Mammary epithelial cell (primary cell): ENCODE measurements at regions of chr6 and their contacts with region 1.

Region 1: GRCh38 chr6:26216356-26216885 is 129.2 kb downstream of the HFE start:
- DNase-seq: peak; percentile 98
- H3K4me3 ChIP-seq: peak overlapping the region; percentile 57 to 68 (median 65)
- H3K27ac ChIP-seq: peak overlapping the region; percentile 86
- H3K4me1 ChIP-seq: peaks cover 12% of the 10 kb centered on the region
- H3K27me3 ChIP-seq: no peaks in the 10 kb centered on the region
- CTCF ChIP-seq: no peak

Region 2: GRCh38 chr6:25746968-25747367 is 469.5 kb before region 1 on chr6:
- CTCF ChIA-PET with region 1: no interaction called
- dilution Hi-C with region 1: no loop called
- in situ Hi-C with region 1: no loop called
- intact Hi-C with region 1: no loop called
- DNase-seq: no peak
- H3K4me3 ChIP-seq: no peak overlapping the region
- H3K27ac ChIP-seq: no peak overlapping the region
- H3K4me1 ChIP-seq: no peaks in the 10 kb centered on the region
- H3K27me3 ChIP-seq: no peaks in the 10 kb centered on the region
- CTCF ChIP-seq: no peak

Region 3: GRCh38 chr6:26045065-26045927 is 171.1 kb before region 1 on chr6:
- CTCF ChIA-PET with region 1: no interaction called
- dilution Hi-C with region 1: no loop called
- in situ Hi-C with region 1: no loop called
- intact Hi-C with region 1: loop called (anchors 1 kb)
- DNase-seq: peak; percentile 93
- H3K4me3 ChIP-seq: peak overlapping the region; percentile 37 to 64 (median 44)
- H3K27ac ChIP-seq: peak overlapping the region; percentile 79
- H3K4me1 ChIP-seq: peaks cover 27% of the 10 kb centered on the region
- H3K27me3 ChIP-seq: no peaks in the 10 kb centered on the region
- CTCF ChIP-seq: peak; percentile 22 to 36

Region 4: DNA sequence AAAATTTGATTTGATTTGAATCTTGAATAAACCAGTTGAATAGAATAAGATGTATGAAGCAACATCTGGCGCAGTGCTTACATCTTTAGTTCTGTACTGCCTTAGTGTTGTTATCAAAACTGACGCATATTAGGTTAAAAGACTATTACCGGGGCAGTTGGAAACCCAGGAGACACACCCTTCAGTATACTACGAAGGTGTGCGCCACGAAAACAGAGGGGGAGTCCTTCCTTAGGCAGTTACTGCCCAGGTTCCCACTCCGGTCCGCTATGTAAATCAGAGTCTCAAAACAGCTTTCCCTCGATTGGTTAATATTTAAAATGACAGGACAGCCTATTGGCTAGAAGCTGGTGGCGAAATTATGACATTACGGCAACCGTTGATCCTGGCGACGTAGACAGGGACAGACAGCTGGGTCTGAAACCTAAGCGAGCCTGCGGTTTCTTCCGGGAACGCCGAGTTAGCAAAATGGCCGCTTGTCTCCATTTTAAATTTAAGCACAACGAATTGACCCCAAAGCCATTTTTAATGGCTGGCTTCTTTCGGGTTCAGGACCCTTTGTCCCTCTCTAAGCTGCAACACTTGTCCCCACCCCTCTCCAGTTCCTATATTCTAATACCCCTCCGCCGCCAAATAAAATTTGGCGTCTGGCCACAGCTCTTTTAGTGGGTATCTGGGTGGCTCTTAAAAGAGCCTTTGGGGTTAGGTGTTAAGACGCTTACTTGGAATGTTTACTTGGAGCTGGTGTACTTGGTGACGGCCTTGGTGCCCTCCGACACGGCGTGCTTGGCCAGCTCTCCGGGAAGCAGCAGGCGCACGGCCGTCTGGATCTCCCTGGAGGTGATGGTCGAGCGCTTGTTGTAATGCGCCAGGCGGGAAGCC is 93.4 kb before region 1 on chr6:
- CTCF ChIA-PET with region 1: no interaction called
- dilution Hi-C with region 1: no loop called
- in situ Hi-C with region 1: no loop called
- intact Hi-C with region 1: loop called (anchors 5 kb)
- DNase-seq: peak; percentile 97
- H3K4me3 ChIP-seq: peak overlapping the region; percentile 51 to 62 (median 53)
- H3K27ac ChIP-seq: peak overlapping the region; percentile 92
- H3K4me1 ChIP-seq: peaks cover 28% of the 10 kb centered on the region
- H3K27me3 ChIP-seq: no peaks in the 10 kb centered on the region
- CTCF ChIP-seq: no peak

Region 5: DNA sequence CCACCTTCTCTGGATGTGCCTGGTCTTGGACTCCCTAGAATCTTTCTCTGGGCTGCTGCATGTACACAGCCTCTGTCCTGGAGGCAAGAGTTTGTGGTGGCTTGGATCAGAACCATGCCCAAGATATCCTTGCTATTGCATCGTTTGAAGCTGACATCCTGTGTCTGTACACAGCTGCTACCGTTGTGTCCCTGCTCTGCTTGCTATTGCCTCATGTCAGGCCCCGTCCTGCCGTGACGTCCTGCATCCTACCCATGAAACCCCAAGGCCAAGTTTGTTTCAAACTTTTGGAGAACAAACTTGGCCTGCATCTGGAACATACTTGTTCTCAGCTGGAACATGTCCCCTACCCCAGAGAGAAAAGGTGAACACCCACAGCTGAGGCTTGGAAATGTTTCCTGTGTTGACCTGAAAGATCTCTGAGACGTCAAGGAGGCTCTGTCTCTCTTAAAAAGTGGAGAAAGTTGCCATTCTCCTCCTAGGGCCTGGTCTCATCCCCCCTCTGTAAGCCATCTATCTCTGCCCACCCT is 51.1 kb before region 1 on chr6:
- CTCF ChIA-PET with region 1: no interaction called
- dilution Hi-C with region 1: no loop called
- in situ Hi-C with region 1: no loop called
- intact Hi-C with region 1: no loop called
- DNase-seq: no peak
- H3K4me3 ChIP-seq: no peak overlapping the region
- H3K27ac ChIP-seq: no peak overlapping the region
- H3K4me1 ChIP-seq: no peaks in the 10 kb centered on the region
- H3K27me3 ChIP-seq: no peaks in the 10 kb centered on the region
- CTCF ChIP-seq: no peak

Region 6: GRCh38 chr6:26196846-26197648 is 19.4 kb before region 1 on chr6:
- CTCF ChIA-PET with region 1: no interaction called
- dilution Hi-C with region 1: no loop called
- in situ Hi-C with region 1: no loop called
- intact Hi-C with region 1: loop called (anchors 1 kb)
- DNase-seq: peak; percentile 89
- H3K4me3 ChIP-seq: peak overlapping the region; percentile 69 to 90 (median 87)
- H3K27ac ChIP-seq: peak overlapping the region; percentile 87
- H3K4me1 ChIP-seq: peaks cover 8% of the 10 kb centered on the region
- H3K27me3 ChIP-seq: no peaks in the 10 kb centered on the region
- CTCF ChIP-seq: no peak

Region 7: DNA sequence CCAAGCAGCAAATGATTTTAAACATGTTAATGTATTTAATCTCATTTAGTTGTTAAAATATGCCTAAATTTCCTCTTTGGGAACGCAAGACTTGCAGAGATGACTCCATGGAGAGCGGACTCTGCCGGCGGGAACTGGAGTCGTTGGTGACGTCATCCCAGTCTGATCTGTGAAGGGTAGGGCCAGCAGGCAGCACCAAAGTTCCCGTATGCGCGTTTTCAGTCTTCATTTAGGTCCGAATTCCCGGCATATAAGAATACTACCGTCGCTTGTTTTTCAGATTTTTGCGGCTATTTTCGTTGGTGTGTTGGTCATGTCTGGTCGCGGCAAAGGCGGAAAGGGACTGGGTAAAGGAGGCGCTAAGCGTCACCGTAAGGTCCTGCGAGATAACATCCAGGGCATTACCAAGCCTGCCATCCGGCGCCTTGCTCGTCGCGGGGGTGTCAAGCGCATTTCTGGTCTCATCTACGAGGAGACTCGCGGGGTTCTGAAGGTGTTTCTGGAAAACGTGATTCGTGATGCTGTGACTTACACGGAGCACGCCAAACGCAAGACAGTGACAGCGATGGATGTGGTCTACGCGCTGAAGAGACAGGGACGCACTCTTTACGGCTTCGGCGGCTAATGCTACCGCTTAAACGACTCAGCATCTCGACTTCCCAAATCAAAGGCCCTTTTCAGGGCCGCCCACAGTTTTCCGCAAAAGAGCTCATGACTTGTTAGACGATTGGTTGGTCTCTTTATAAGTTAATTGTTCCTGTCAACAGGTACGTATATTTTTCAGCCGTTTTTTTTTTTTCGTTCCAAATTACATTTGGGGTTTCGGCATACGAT is 11.9 kb before region 1 on chr6:
- CTCF ChIA-PET with region 1: no interaction called
- dilution Hi-C with region 1: no loop called
- in situ Hi-C with region 1: no loop called
- intact Hi-C with region 1: loop called (anchors 1 kb)
- DNase-seq: peak; percentile 95
- H3K4me3 ChIP-seq: peak overlapping the region; percentile 67 to 73 (median 71)
- H3K27ac ChIP-seq: peak overlapping the region; percentile 97
- H3K4me1 ChIP-seq: peaks cover 19% of the 10 kb centered on the region
- H3K27me3 ChIP-seq: no peaks in the 10 kb centered on the region
- CTCF ChIP-seq: peak; percentile 11 to 36

Region 8: DNA sequence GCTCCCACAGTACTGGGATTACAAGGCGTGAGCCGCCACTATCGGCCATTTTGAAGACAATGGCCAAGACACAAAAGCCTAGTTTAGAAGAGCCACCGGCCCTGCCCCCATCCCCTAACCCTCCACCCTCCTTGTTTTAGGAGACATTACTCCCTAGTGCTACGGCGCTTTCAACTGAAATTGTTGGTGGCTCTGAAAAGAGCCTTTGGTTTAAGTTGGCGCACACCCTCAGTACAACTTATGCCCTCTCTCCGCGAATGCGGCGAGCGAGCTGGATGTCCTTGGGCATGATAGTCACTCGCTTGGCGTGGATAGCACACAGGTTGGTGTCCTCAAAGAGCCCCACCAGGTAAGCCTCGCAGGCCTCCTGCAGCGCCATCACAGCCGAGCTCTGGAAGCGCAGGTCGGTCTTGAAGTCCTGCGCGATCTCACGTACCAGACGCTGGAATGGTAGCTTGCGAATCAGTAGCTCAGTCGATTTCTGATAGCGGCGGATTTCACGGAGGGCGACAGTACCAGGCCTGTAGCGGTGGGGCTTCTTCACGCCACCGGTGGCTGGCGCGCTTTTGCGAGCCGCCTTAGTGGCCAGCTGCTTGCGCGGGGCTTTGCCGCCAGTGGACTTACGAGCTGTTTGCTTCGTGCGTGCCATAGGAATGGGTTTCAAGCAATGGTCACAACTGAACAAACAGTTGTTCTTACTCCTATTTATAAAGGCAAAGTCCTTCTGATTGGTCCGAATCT is 33.7 kb after region 1 on chr6:
- CTCF ChIA-PET with region 1: interaction called, 17 read pairs
- dilution Hi-C with region 1: no loop called
- in situ Hi-C with region 1: no loop called
- intact Hi-C with region 1: loop called (anchors 1 kb)
- DNase-seq: peak; percentile 84
- H3K4me3 ChIP-seq: peak overlapping the region; percentile 62 to 71 (median 69)
- H3K27ac ChIP-seq: peak overlapping the region; percentile 53
- H3K4me1 ChIP-seq: peaks cover 8% of the 10 kb centered on the region
- H3K27me3 ChIP-seq: no peaks in the 10 kb centered on the region
- CTCF ChIP-seq: peak; percentile 37 to 68

Region 9: GRCh38 chr6:26312501-26313390 is 96.3 kb after region 1 on chr6:
- CTCF ChIA-PET with region 1: no interaction called
- dilution Hi-C with region 1: no loop called
- in situ Hi-C with region 1: no loop called
- intact Hi-C with region 1: loop called (anchors 1 kb)
- DNase-seq: peak; percentile 81
- H3K4me3 ChIP-seq: peak overlapping the region; percentile 60 to 89 (median 70)
- H3K27ac ChIP-seq: peak overlapping the region; percentile 58
- H3K4me1 ChIP-seq: peaks cover 28% of the 10 kb centered on the region
- H3K27me3 ChIP-seq: no peaks in the 10 kb centered on the region
- CTCF ChIP-seq: no peak